CD4-positive, alpha-beta memory T cell (primary cell): ENCODE measurements at regions of chr3 and their contacts with region 1.

Region 1: DNA sequence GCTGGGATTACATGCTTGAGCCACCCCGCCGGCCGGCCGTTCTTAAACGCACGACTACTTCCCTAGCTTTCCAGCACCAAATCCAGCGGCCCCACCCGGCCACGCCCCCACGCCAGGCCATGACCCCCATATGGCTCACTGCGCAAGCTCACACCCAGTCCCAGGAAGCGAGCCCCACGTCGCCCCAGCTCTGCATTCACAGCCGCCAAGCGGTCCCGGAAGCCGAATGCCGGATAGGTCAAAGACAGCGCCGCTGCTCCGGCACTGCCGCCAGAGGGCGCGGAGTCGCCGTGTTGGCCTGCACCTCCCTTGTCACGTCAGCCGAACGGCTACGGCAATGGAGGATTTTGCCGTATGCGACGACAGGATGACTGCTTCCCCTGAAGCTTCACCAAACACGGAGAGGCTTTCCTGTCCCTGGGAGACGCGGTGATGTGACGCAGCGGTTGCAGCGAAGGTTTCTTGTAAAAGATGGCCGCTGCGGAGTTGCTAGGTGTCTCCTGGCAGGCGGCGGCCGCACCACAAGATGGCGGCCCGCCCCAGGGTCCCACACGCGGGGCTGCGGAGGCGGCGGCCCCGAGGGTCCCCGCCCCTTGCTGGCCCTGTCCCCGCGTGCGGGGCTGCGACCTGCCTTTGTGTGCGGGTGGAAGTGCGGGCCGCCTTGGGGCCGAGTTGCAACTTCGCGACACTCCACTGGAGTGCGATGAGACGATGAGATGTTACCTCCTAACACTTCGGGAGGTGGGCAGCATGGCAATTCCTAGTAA is 30.2 kb upstream of the RPN1 start:
- DNase-seq: peak; percentile 96 to 97 (median 97)
- H3K4me3 ChIP-seq: peak overlapping the region; percentile 76 to 85
- H3K4me3 Mint-ChIP-seq: peak overlapping the region; percentile 87 to 98 (median 97)
- H3K27ac ChIP-seq: peak overlapping the region; percentile 89
- H3K27ac Mint-ChIP-seq: peak overlapping the region; percentile 95 to 99 (median 99)
- H3K4me1 ChIP-seq: peaks cover 27% of the 10 kb centered on the region
- H3K4me1 Mint-ChIP-seq: peaks cover 15 to 36% (median 19%) of the 10 kb centered on the region in 4 donors
- H3K27me3 ChIP-seq: no peaks in the 10 kb centered on the region
- H3K27me3 Mint-ChIP-seq: no peaks in the 10 kb centered on the region

Region 2: GRCh38 chr3:128655531-128655930 is 25.3 kb before region 1 on chr3:
- CTCF ChIA-PET with region 1: interaction called, 26 read pairs
- POLR2A ChIA-PET with region 1: interaction called, 41 read pairs
- intact Hi-C with region 1: loop called (anchors 1 kb)
- DNase-seq: no peak
- H3K4me3 ChIP-seq: no peak overlapping the region
- H3K4me3 Mint-ChIP-seq: peak overlapping the region in 7 of 8 donors; percentile 14 to 85 (median 59)
- H3K27ac ChIP-seq: no peak overlapping the region
- H3K27ac Mint-ChIP-seq: peak overlapping the region in 3 of 7 donors; percentile 16 to 42 (median 22)
- H3K4me1 ChIP-seq: no peaks in the 10 kb centered on the region
- H3K4me1 Mint-ChIP-seq: peaks cover 7 to 21% (median 9%) of the 10 kb centered on the region in 4 donors
- H3K27me3 ChIP-seq: no peaks in the 10 kb centered on the region
- H3K27me3 Mint-ChIP-seq: no peaks in the 10 kb centered on the region

Region 3: DNA sequence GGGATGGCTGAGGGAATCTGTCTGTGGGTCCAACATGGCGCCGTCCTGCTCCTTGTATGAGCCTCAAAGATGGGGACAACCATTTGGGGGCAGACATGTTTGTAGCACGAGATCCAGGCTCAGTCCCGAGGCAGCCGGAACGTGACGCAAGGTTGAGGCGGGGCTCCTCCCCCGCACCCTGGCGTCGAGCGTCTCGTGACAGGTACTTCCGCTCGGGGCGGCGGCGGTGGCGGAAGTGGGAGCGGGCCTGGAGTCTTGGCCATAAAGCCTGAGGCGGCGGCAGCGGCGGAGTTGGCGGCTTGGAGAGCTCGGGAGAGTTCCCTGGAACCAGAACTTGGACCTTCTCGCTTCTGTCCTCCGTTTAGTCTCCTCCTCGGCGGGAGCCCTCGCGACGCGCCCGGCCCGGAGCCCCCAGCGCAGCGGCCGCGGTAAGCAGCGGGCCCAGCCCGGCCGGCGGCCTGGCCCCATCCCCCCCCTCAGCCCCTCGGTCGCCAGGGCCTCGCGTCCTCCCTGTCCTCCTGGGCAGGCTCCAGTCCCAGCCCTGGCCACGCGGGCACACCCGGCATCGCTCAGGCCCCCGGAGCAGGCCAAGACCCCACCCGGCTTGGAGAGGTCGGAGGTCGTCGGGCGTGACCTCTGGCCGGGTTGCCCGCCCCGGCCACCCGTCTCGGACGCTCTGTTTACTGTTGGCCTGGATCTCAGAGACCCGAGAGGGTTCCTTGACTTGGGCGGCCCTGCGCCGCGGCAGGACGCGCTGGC is 45.3 kb after region 1 on chr3 and contains the start of gene RAB7A:
- CTCF ChIA-PET with region 1: interaction called, 20 read pairs
- POLR2A ChIA-PET with region 1: interaction called, 44 read pairs
- intact Hi-C with region 1: loop called (anchors 1 kb)
- DNase-seq: peak; percentile 96 to 97 (median 96)
- H3K4me3 ChIP-seq: peak within 1 kb of the TSS; percentile 79 to 86
- H3K4me3 Mint-ChIP-seq: peak within 1 kb of the TSS; percentile 93 to 100 (median 97)
- H3K27ac ChIP-seq: peak within 1 kb of the TSS; percentile 98
- H3K27ac Mint-ChIP-seq: peak within 1 kb of the TSS; percentile 95 to 98 (median 97)
- H3K4me1 ChIP-seq: peaks cover 50% of the 10 kb centered on the region
- H3K4me1 Mint-ChIP-seq: peaks cover 40 to 59% (median 47%) of the 10 kb centered on the region in 4 donors
- H3K27me3 ChIP-seq: no peaks in the 10 kb centered on the region
- H3K27me3 Mint-ChIP-seq: peaks cover 0 to 2% of the 10 kb centered on the region in 2 donors
- total RNA-seq, gene RAB7A: 141 to 152 TPM

Region 4: GRCh38 chr3:128787256-128788240 is 106.8 kb after region 1 on chr3:
- CTCF ChIA-PET with region 1: interaction called, 186 read pairs
- POLR2A ChIA-PET with region 1: interaction called, 63 read pairs
- intact Hi-C with region 1: no loop called
- DNase-seq: peak; percentile 39 to 77 (median 43)
- H3K4me3 ChIP-seq: peak overlapping the region; percentile 0 to 57
- H3K4me3 Mint-ChIP-seq: peak overlapping the region; percentile 53 to 90 (median 84)
- H3K27ac ChIP-seq: peak overlapping the region; percentile 48
- H3K27ac Mint-ChIP-seq: peak overlapping the region; percentile 89 to 98 (median 94)
- H3K4me1 ChIP-seq: peaks cover 79% of the 10 kb centered on the region
- H3K4me1 Mint-ChIP-seq: peaks cover 56 to 87% (median 72%) of the 10 kb centered on the region in 4 donors
- H3K27me3 ChIP-seq: no peaks in the 10 kb centered on the region
- H3K27me3 Mint-ChIP-seq: no peaks in the 10 kb centered on the region

Region 5: DNA sequence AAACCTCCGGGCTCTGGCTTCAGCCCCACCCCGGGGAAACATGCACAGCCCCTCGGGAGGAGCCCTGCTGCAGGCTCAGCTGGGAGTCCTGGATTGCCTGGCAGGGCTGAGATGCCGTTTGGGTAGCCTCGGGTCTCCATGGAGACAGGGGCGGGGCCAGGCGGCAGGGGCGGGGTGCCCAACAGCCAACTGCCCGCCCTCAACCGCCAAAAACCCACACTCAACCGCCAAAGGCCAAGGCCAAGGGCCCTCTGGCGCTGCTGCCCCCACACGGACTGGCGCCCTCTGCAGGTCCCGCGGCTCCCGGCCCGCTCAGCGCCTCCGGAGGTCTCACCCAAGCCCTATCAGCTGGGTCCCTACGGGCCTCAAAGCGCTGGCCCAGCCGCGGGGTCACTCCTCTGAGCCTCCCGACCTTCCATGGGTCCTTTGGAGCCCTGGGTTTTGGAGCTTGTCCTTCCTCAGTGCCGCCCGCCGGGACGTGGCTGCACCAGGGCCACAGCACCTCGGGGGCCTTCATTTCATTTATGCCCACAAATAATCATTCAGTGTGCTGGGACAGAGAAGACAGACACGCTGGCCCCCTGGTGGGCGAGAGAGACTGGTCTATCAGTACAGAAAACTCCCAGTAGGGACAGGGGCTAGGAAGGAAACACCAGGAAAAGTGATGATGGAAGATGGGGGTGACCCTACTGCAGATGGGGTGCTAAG is 165.1 kb after region 1 on chr3:
- CTCF ChIA-PET with region 1: interaction called, 68 read pairs
- POLR2A ChIA-PET with region 1: interaction called, 40 read pairs
- intact Hi-C with region 1: loop called (anchors 1 kb)
- DNase-seq: peak; percentile 71 to 82 (median 73)
- H3K4me3 ChIP-seq: peak overlapping the region in 1 of 2 donors; percentile 52
- H3K4me3 Mint-ChIP-seq: peak overlapping the region; percentile 75 to 95 (median 88)
- H3K27ac ChIP-seq: peak overlapping the region; percentile 29
- H3K27ac Mint-ChIP-seq: peak overlapping the region; percentile 45 to 97 (median 84)
- H3K4me1 ChIP-seq: peaks cover 18% of the 10 kb centered on the region
- H3K4me1 Mint-ChIP-seq: peaks cover 8 to 14% (median 11%) of the 10 kb centered on the region in 4 donors
- H3K27me3 ChIP-seq: no peaks in the 10 kb centered on the region
- H3K27me3 Mint-ChIP-seq: no peaks in the 10 kb centered on the region